ENCODE measurements at regions of chr2 and their contacts with region 1.

Region 1: DNA sequence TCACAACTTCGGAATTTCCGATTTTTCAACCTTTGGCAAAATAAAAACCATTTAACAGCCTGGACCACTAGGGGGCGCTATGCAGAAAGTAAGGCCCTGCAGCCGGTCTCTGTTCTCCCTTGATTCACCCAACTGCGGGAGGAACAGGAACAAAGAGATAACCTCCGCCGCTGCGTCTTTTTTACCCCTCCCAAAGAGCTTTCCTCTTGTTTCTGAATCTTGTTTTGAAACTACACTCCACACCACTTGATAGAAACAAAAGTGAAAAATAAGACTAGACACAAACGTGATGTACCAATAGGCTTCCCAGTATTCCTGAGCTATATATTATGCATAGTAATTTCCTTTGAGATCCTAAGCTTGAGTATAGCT is 231.2 kb downstream of the MYO3B start:
- DNase-seq: peak; percentile 56
- CTCF ChIP-seq: peak; percentile 60

Region 2: DNA sequence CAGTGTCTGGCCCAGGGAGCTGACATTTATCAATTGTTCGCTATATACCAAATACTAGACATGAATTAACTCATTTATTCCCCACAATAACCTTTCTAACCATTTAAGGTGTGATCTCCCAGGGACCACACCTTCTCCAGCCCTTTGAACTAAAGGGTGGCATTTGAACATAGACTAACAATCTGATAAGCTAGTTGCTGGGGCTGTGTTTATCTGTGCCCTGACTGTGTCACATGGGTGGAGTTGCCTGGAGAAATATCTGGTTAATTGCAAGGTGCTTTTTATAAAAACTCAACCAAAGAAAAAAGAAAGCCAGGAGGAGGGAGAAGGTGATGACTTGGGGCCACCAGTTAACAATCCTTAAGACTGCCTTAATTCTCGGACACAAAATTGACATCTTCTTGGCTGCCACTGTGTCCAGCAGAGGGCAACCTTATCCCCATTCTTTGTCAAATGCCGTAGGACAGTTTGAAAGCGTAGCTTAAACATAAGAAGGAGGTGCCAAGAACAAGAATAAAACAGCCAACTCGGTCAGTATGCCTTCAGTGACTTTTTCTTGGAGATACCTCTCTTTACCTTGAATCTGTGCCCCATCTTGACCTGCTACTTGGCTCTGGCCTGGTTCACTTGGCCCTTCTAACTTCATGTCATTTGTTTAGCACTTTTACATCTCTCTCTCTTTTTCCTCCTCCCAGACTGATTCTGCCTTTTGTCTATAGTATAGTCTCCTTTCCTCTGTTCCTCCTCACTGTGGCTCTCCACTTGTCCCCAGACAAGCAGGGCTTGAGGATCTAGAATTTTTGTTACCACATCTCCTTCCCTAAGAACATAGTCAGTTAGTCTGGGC is 47.8 kb before region 1 on chr2:
- CTCF ChIA-PET with region 1: interaction called, 11 read pairs
- POLR2A ChIA-PET with region 1: no interaction called
- DNase-seq: peak; percentile 26
- CTCF ChIP-seq: peak; percentile 81

Region 3: GRCh38 chr2:170386554-170386953 is 22.6 kb before region 1 on chr2:
- CTCF ChIA-PET with region 1: interaction called, 22 read pairs
- POLR2A ChIA-PET with region 1: no interaction called
- DNase-seq: no peak
- CTCF ChIP-seq: no peak

Region 4: DNA sequence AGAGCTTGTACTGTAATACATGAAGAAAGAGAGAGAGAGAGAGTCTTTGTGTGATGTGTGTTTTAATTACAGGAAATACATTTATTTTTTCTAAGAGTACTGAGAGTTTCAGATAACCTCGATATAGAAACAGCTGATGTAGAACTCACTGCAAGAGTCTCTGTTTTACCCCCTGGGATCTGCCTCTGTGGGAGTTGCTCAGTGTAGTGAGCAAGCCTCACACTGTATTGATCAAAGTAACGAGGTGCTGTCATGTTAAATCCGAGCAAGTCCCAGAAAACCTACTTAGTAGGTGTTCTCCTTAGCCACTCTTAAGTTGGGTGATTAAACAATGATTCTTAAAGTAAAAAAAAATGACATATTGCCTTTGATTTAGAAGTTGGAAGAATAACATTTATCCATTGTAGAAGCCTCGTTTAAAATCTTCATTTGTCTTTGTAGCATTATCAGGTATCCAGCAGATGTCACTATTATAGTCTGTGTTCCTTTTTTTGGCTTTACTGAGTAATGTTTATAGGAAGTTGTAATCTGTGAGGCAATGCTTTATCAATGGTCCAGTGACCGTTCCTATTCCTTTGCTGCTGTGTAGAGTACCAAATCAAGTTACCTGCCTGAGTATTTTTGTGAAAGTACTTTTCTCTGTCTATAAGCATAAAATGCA is 12.2 kb before region 1 on chr2:
- CTCF ChIA-PET with region 1: interaction called, 33 read pairs
- POLR2A ChIA-PET with region 1: no interaction called
- DNase-seq: no peak
- CTCF ChIP-seq: peak; percentile 45

Region 5: GRCh38 chr2:170425281-170425751 is 16.2 kb after region 1 on chr2:
- CTCF ChIA-PET with region 1: interaction called, 49 read pairs
- POLR2A ChIA-PET with region 1: no interaction called
- DNase-seq: no peak
- CTCF ChIP-seq: no peak

Region 6: GRCh38 chr2:170434900-170435621 is 25.9 kb after region 1 on chr2:
- CTCF ChIA-PET with region 1: interaction called, 11 read pairs
- POLR2A ChIA-PET with region 1: no interaction called
- DNase-seq: peak; percentile 22
- CTCF ChIP-seq: no peak

Region 7: GRCh38 chr2:170815746-170816503 is 406.8 kb after region 1 on chr2:
- CTCF ChIA-PET with region 1: interaction called, 13 read pairs
- POLR2A ChIA-PET with region 1: no interaction called
- DNase-seq: peak; percentile 80
- CTCF ChIP-seq: peak; percentile 70

Measured in GM10248 (cell line).